GM10248 (cell line): ENCODE measurements at regions of chrX and their contacts with region 1.

Region 1: GRCh38 chrX:149267878-149268813 is 237.0 kb downstream of the IDS start:
- DNase-seq: peak; percentile 8
- CTCF ChIP-seq: no peak

Region 2: GRCh38 chrX:149280011-149280410 is 11.9 kb after region 1 on chrX:
- CTCF ChIA-PET with region 1: interaction called, 10 read pairs
- POLR2A ChIA-PET with region 1: no interaction called
- DNase-seq: no peak
- CTCF ChIP-seq: no peak

Region 3: GRCh38 chrX:149286940-149287349 is 18.8 kb after region 1 on chrX:
- CTCF ChIA-PET with region 1: interaction called, 14 read pairs
- POLR2A ChIA-PET with region 1: no interaction called
- DNase-seq: peak; percentile 34
- CTCF ChIP-seq: peak; percentile 54